Activated naive CD4-positive, alpha-beta T cell treated with anti-CD3 and anti-CD28 coated beads for 36 hours (primary cell): ENCODE measurements at regions of chr6 and their contacts with region 1.

Region 1: DNA sequence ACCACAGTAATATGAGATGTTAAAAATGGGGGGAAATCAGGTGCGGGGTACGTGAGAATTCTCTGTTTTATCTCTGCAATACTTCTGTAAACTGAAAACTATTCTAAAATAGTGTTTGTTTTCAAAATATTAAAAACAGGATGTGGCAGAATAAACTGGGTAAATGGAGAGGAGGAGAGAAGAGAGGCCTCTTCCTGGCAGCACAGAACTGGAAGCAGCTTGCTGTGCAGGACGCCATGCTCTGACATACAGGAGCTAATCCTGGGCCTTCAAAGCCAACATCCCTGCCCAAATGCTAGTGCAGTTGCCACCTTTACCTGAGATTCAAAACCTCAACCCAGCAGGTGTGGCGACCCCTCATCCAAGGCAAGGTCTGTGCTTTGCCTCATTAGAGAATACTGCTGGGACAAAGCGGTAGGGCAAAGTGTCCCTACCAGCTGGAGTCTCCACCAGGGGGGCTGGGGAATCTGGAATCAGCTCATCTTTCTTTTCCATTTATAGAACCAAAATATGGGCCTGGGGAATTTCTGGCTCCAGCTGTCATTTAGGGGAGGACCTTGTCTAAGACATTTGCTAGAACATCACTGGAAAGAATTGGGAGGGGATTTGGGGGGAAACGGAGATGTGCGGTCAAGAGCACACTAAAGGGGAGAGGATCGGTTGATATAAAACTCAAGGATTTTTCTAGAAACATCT is 67.3 kb downstream of the SCML4 start:
- DNase-seq: no peak
- H3K4me3 Mint-ChIP-seq: no peak overlapping the region
- H3K27ac Mint-ChIP-seq: peak overlapping the region; percentile 28
- H3K4me1 Mint-ChIP-seq: peaks cover 44% of the 10 kb centered on the region
- H3K27me3 Mint-ChIP-seq: no peaks in the 10 kb centered on the region

Region 2: GRCh38 chr6:107571354-107571753 is 185.5 kb before region 1 on chr6:
- CTCF ChIA-PET with region 1: no interaction called
- intact Hi-C with region 1: no loop called
- DNase-seq: no peak
- H3K4me3 Mint-ChIP-seq: no peak overlapping the region
- H3K27ac Mint-ChIP-seq: no peak overlapping the region
- H3K4me1 Mint-ChIP-seq: no peaks in the 10 kb centered on the region
- H3K27me3 Mint-ChIP-seq: peaks cover 3% of the 10 kb centered on the region

Region 3: GRCh38 chr6:107740496-107741190 is 16.2 kb before region 1 on chr6:
- CTCF ChIA-PET with region 1: interaction called, 4 read pairs
- intact Hi-C with region 1: loop called (anchors 1 kb)
- DNase-seq: peak; percentile 51
- H3K4me3 Mint-ChIP-seq: peak overlapping the region; percentile 66
- H3K27ac Mint-ChIP-seq: peak overlapping the region; percentile 84
- H3K4me1 Mint-ChIP-seq: peaks cover 63% of the 10 kb centered on the region
- H3K27me3 Mint-ChIP-seq: no peaks in the 10 kb centered on the region

Region 4: DNA sequence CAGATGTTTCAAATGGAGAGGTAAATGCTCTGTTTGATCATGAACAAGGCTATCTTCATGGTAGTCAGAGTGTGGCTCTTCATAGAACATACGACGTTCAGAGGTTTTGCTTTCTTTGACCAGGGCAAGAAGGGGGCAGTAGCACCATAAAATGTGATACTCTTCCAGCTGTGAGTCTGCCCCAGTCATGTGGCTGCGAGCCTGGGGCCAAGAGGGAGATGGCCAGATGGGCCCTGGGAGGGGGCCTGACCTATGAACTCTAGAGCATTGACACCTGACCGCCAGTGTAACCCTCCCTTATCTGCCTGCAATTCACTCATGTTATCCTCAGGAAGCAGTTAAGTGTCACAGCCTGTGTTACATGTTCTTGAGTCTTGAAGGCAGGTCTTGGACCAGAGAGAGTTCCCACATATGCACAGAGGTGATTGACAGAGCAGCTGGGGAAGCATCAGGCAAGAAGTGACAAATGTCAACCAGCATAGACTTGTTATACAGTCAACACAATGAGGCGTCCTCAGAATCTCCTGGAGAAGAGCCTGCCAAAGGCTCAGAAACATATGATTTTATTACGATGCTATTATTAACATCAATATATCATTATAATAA is 12.3 kb after region 1 on chr6:
- CTCF ChIA-PET with region 1: interaction called, 3 read pairs
- intact Hi-C with region 1: loop called (anchors 2 kb)
- DNase-seq: no peak
- H3K4me3 Mint-ChIP-seq: no peak overlapping the region
- H3K27ac Mint-ChIP-seq: no peak overlapping the region
- H3K4me1 Mint-ChIP-seq: peaks cover 32% of the 10 kb centered on the region
- H3K27me3 Mint-ChIP-seq: no peaks in the 10 kb centered on the region

Region 5: GRCh38 chr6:109055771-109056235 is 1299.0 kb after region 1 on chr6:
- CTCF ChIA-PET with region 1: no interaction called
- intact Hi-C with region 1: no loop called
- DNase-seq: no peak
- H3K4me3 Mint-ChIP-seq: no peak overlapping the region
- H3K27ac Mint-ChIP-seq: no peak overlapping the region
- H3K4me1 Mint-ChIP-seq: peaks cover 29% of the 10 kb centered on the region
- H3K27me3 Mint-ChIP-seq: no peaks in the 10 kb centered on the region